Posterior cingulate gyrus (tissue), 11 donors: ENCODE measurements at regions of chr7 and their contacts with region 1.

Region 1: DNA sequence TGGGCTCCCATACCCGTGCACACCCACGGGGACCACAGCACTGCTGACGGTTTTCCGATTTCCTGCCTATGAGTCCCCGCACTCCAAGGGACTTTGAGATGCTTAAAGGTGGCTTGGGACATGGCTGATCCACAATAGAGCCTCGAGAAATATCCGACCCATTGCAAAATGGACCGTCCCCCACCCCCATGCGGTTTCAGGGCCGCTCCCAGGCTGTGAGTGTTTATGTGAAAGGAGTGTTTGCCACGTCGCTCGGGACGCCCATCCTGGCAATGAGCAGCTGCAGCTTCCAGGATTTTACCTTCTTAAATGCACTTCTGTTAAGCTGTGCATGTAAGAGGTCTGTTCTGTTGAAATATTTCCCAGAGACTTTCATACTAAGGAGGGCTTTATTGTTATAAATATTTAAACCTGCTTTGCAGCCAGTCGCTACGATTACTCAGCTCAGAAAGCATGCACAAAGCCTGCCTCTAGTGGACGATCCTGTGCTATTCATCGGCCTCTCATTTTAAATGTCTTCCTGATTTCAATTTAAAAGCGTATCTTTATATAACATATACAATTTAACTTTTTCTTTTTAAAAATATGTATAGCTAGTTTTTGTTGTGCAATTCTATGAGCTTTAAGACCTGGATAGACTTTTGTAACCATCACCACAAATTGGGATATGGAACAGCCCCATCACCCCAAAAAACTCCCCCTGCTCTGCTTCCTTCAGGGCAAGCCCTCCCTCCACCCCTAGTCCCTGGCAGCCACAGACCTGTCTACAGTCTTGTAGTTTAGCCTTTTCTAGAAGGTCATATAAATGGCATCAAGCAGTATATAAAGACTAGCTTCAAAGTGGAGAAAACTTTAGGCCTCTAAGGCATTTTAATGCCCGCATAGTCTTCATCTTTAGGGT is 418.3 kb downstream of the PAXIP1 start:
- DNase-seq: peak in 3 of 10 donors; percentile 44 to 87 (median 49)

Region 2: GRCh38 chr7:154390961-154391360 is 193.6 kb before region 1 on chr7:
- intact Hi-C with region 1: no loop called
- DNase-seq: peak in 8 of 10 donors; percentile 25 to 92 (median 70)

Region 3: DNA sequence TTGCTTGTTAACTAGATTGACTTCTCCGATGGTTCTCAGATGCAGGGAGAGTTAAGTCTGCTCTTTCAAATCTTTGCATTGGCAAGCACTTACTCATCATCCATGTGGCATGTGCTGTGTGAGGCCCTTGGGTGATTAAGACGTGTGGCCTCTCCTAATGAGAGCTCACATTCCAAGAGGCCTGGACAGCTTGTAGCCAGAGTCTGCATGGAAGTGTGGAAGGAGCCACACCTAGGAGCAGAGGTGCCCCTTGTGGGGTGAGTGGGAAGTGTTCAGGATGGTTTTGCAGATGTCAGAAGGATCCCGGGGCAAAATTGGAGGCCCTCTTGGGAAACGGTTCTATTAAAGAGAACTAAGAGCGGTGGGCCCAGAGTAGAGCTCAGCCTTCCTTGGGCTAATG is 192.4 kb after region 1 on chr7:
- intact Hi-C with region 1: loop called (anchors 10 kb)
- DNase-seq: peak in 2 of 10 donors; percentile 18 to 84

Region 4: DNA sequence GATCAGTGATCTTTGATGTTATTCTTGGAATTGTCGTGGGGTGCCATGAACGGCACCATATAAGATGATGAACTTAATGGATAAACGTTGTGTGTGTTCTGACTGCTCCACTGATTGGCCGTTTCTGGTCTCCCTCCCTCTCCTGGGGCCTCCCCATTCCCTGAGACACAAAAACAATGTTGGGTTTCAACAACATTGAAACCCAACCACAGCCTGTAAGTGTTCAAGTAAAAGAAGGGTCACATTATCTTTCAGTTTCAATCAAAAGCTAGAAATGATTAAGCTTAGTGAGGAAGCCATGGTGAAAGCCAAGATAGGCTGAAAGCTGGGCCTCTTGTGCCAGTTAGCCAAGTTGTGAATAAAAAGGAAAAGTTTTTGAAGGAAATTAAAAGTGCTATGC is 892.9 kb after region 1 on chr7:
- intact Hi-C with region 1: no loop called
- DNase-seq: no peak